Naive thymus-derived CD4-positive, alpha-beta T cell (primary cell): ENCODE measurements at regions of chr14 and their contacts with region 1.

Region 1: GRCh38 chr14:73728717-73729330 is 14.6 kb upstream of the PNMA1 start:
- DNase-seq: peak; percentile 65 to 91 (median 81)
- ATAC-seq: peak; percentile 96
- H3K4me3 ChIP-seq: no peak overlapping the region
- H3K4me3 Mint-ChIP-seq: peak overlapping the region in 1 of 10 donors; percentile 43
- H3K27ac ChIP-seq: no peak overlapping the region
- H3K27ac Mint-ChIP-seq: peak overlapping the region; percentile 60 to 90 (median 84)
- H3K4me1 ChIP-seq: peaks cover 4 to 12% of the 10 kb centered on the region in 2 donors
- H3K4me1 Mint-ChIP-seq: peaks cover 5 to 42% (median 16%) of the 10 kb centered on the region in 7 donors
- H3K27me3 ChIP-seq: no peaks in the 10 kb centered on the region
- H3K27me3 Mint-ChIP-seq: no peaks in the 10 kb centered on the region

Region 2: GRCh38 chr14:73633116-73634010 is 95.5 kb before region 1 on chr14:
- CTCF ChIA-PET with region 1: no interaction called
- POLR2A ChIA-PET with region 1: no interaction called
- intact Hi-C with region 1: no loop called
- DNase-seq: peak; percentile 17 to 65 (median 58)
- ATAC-seq: peak; percentile 89
- H3K4me3 ChIP-seq: peak overlapping the region; percentile 56
- H3K4me3 Mint-ChIP-seq: peak overlapping the region; percentile 59 to 86 (median 78)
- H3K27ac ChIP-seq: peak overlapping the region; percentile 42
- H3K27ac Mint-ChIP-seq: peak overlapping the region in 2 of 9 donors; percentile 46 to 69
- H3K4me1 ChIP-seq: no peaks in the 10 kb centered on the region
- H3K4me1 Mint-ChIP-seq: peaks cover 0 to 7% (median 5%) of the 10 kb centered on the region in 7 donors
- H3K27me3 ChIP-seq: no peaks in the 10 kb centered on the region
- H3K27me3 Mint-ChIP-seq: peaks cover 8 to 42% (median 11%) of the 10 kb centered on the region in 5 donors

Region 3: GRCh38 chr14:73741386-73741875 is 12.6 kb after region 1 on chr14:
- CTCF ChIA-PET with region 1: interaction called, 56 read pairs
- POLR2A ChIA-PET with region 1: interaction called, 12 read pairs
- intact Hi-C with region 1: loop called (anchors 1 kb)
- DNase-seq: peak in 7 of 9 donors; percentile 54 to 75 (median 57)
- ATAC-seq: peak; percentile 78
- H3K4me3 ChIP-seq: peak overlapping the region; percentile 52
- H3K4me3 Mint-ChIP-seq: peak overlapping the region; percentile 66 to 95 (median 88)
- H3K27ac ChIP-seq: peak overlapping the region; percentile 72
- H3K27ac Mint-ChIP-seq: peak overlapping the region; percentile 77 to 99 (median 93)
- H3K4me1 ChIP-seq: peaks cover 65 to 69% of the 10 kb centered on the region in 2 donors
- H3K4me1 Mint-ChIP-seq: peaks cover 43 to 71% (median 67%) of the 10 kb centered on the region in 7 donors
- H3K27me3 ChIP-seq: no peaks in the 10 kb centered on the region
- H3K27me3 Mint-ChIP-seq: no peaks in the 10 kb centered on the region

Region 4: GRCh38 chr14:73771848-73772638 is 43.2 kb after region 1 on chr14:
- CTCF ChIA-PET with region 1: interaction called, 17 read pairs
- POLR2A ChIA-PET with region 1: interaction called, 3 read pairs
- intact Hi-C with region 1: loop called in 1 of 2 experiments (anchors 1 kb)
- DNase-seq: peak in 8 of 9 donors; percentile 57 to 73 (median 65)
- ATAC-seq: peak; percentile 82
- H3K4me3 ChIP-seq: peak overlapping the region; percentile 24
- H3K4me3 Mint-ChIP-seq: peak overlapping the region; percentile 63 to 81 (median 74)
- H3K27ac ChIP-seq: peak overlapping the region; percentile 69
- H3K27ac Mint-ChIP-seq: peak overlapping the region; percentile 80 to 94 (median 92)
- H3K4me1 ChIP-seq: peaks cover 56 to 65% of the 10 kb centered on the region in 2 donors
- H3K4me1 Mint-ChIP-seq: peaks cover 57 to 79% (median 69%) of the 10 kb centered on the region in 7 donors
- H3K27me3 ChIP-seq: no peaks in the 10 kb centered on the region
- H3K27me3 Mint-ChIP-seq: no peaks in the 10 kb centered on the region

Region 5: GRCh38 chr14:73785873-73786695 is 57.3 kb after region 1 on chr14:
- CTCF ChIA-PET with region 1: interaction called, 6 read pairs
- POLR2A ChIA-PET with region 1: interaction called, 7 read pairs
- intact Hi-C with region 1: loop called in 1 of 2 experiments (anchors 1 kb)
- DNase-seq: peak; percentile 41 to 65 (median 60)
- ATAC-seq: peak; percentile 74
- H3K4me3 ChIP-seq: peak overlapping the region; percentile 91
- H3K4me3 Mint-ChIP-seq: peak overlapping the region; percentile 87 to 99 (median 97)
- H3K27ac ChIP-seq: peak overlapping the region; percentile 96
- H3K27ac Mint-ChIP-seq: peak overlapping the region; percentile 92 to 97 (median 94)
- H3K4me1 ChIP-seq: peaks cover 45% of the 10 kb centered on the region in 2 donors
- H3K4me1 Mint-ChIP-seq: peaks cover 50 to 73% (median 66%) of the 10 kb centered on the region in 7 donors
- H3K27me3 ChIP-seq: no peaks in the 10 kb centered on the region
- H3K27me3 Mint-ChIP-seq: no peaks in the 10 kb centered on the region

Region 6: DNA sequence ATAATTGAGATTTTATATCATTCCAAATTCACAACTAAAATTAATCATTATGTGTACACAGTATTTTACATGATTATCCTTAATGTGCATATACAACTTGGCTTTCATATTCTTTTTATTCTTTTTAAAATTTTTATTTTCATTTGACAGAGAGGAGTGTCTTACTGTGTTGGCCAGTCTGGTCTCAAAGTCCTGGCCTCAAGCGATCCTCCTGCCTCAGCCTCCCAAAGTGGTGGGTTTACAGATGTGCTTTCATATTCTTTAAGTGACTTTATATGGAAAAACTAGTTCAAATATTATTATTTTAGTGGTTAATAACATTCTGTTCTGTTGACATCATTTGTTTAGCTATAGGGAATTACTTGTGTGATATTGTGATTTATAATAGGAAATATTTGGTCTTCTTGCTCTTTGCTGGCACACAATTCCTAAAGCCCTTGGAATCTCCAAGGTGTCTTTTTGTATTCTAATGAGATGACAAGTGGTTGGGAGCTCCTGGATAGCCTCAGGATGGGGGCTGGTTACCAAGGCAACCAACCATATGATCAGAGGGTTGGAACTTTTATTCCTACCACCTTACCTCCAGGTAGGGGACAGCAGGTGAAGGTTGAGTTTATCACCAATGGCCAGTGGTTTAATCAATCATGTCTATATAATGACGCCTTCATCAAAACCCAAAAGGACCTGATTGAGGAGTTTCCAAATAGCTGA is 141.9 kb after region 1 on chr14:
- CTCF ChIA-PET with region 1: no interaction called
- POLR2A ChIA-PET with region 1: no interaction called
- intact Hi-C with region 1: loop called (anchors 1 kb)
- DNase-seq: no peak
- ATAC-seq: no peak
- H3K4me3 ChIP-seq: no peak overlapping the region
- H3K4me3 Mint-ChIP-seq: no peak overlapping the region
- H3K27ac ChIP-seq: no peak overlapping the region
- H3K27ac Mint-ChIP-seq: no peak overlapping the region
- H3K4me1 ChIP-seq: no peaks in the 10 kb centered on the region
- H3K4me1 Mint-ChIP-seq: peaks cover 0 to 6% (median 0%) of the 10 kb centered on the region in 7 donors
- H3K27me3 ChIP-seq: no peaks in the 10 kb centered on the region
- H3K27me3 Mint-ChIP-seq: peaks cover 0 to 2% (median 0%) of the 10 kb centered on the region in 5 donors

Region 7: DNA sequence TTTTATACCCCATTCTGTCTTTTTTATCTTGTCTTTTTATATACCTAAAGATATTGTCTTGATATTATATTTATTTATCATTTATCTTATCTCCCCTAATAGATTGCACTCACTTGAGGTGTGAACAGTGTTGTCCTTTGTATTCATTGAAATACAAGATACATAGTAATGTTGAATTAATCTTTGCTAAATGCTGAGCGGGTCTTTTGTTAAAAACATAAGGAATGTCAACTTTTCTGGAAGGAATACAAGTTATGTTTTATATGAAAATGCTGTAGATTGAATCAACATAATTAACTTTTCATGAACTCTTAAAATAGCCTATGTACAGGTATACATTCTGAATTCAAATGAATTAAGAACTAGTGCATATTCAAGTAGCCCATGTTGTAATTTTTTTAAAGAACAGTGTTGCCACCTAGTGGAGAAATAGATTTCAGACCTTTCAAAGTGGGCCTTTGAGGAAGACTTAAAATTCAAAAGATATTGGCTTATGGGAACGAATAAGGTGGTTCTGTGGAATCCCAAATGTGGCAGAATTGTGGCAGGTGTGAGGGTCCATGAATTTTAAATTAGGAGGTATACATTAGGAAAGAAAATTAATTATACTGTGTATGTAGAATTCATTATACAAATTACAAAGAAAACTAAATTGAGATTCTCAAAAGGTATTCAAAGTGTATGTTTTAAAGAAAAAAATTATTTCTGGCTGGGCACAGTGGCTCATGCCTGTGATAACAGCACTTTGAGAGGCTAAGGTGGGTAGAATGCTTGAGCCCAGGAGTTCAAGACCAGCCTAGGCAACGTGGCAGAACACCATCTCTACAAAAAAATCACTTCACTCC is 309.4 kb after region 1 on chr14:
- CTCF ChIA-PET with region 1: interaction called, 6 read pairs
- POLR2A ChIA-PET with region 1: no interaction called
- intact Hi-C with region 1: loop called (anchors 1 kb)
- DNase-seq: peak in 7 of 9 donors; percentile 19 to 63 (median 49)
- ATAC-seq: peak; percentile 65
- H3K4me3 ChIP-seq: no peak overlapping the region
- H3K4me3 Mint-ChIP-seq: no peak overlapping the region
- H3K27ac ChIP-seq: no peak overlapping the region
- H3K27ac Mint-ChIP-seq: peak overlapping the region in 1 of 9 donors; percentile 29
- H3K4me1 ChIP-seq: no peaks in the 10 kb centered on the region
- H3K4me1 Mint-ChIP-seq: no peaks in the 10 kb centered on the region
- H3K27me3 ChIP-seq: no peaks in the 10 kb centered on the region
- H3K27me3 Mint-ChIP-seq: no peaks in the 10 kb centered on the region